Adrenal gland (tissue), 19 donors: ENCODE measurements at regions of chr1 and their contacts with region 1.

Region 1: DNA sequence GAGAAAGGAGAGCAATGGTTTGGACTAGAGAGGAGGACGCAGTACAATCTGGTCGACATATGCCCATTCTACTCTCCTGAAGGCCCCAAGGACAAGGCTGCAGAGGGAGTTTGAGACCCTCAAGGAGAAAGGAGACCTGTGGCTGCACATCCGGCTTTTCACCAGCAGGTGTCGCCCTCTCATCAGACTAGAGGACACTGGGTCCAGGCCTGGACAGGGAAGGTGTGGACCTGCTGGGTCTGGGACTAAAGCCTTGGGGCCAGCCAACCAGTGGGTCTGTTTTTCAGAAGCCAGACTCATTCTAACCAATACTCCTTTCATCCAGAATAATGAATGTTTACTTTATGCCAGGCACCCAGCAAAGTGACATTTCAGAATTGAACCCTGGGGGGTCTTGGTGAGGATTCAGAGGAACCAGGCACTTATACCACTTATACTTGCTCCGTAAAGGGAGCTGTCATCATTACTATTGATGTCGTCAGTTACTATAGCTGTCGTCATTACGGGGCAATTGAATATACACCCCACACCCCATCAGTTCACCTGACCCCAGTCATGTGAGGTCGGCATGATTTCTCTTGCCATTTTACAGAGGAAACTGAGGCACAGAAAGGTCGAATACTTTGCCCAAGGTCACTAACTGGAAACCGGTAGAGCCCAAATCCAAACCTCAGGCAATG is 5.1 kb downstream of the SRARP start:
- DNase-seq: peak; percentile 80 to 94 (median 86)
- H3K4me3 ChIP-seq: no peak overlapping the region
- H3K27ac ChIP-seq: no peak overlapping the region
- H3K4me1 ChIP-seq: peaks cover 21% of the 10 kb centered on the region in 2 donors
- H3K27me3 ChIP-seq: no peaks in the 10 kb centered on the region
- CTCF ChIP-seq: peak; percentile 97 to 98 (median 97)
- POLR2A ChIP-seq: no peak

Region 2: DNA sequence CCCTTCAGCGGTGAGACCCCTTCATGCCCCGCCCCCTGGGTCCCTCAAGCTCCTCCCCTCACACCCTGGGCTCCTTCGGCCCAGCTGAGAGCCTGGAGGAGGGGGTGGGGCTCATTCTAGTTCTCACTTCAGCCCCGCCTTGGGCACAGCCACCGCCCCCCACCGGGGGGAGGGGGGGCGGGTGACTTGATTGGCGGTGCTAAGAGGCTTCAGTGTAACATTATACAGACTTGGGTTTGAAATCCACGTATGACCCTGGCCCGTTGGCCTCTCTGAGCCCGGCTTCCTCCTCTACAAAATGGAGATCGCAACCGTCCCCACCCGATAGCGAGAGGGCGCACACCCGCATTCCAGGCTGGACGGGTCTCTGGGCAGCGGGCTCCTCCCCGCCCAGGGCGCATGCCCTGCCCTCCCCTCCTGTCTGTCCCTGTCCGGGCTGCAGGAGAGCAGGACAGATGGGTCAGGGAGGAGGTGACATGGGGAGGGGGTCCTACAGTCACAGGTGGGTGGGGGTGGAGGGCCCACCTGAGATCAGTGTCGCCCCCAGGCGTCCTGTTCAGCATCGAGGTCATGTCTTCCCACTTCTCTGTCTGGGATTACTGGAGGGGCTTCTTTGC is 39.5 kb after region 1 on chr1:
- intact Hi-C with region 1: loop called (anchors 5 to 10 kb)
- DNase-seq: peak in 2 of 7 donors; percentile 39 to 72
- H3K4me3 ChIP-seq: peak overlapping the region in 1 of 4 donors; percentile 52
- H3K27ac ChIP-seq: no peak overlapping the region
- H3K4me1 ChIP-seq: no peaks in the 10 kb centered on the region
- H3K27me3 ChIP-seq: no peaks in the 10 kb centered on the region
- CTCF ChIP-seq: no peak
- POLR2A ChIP-seq: no peak

Region 3: DNA sequence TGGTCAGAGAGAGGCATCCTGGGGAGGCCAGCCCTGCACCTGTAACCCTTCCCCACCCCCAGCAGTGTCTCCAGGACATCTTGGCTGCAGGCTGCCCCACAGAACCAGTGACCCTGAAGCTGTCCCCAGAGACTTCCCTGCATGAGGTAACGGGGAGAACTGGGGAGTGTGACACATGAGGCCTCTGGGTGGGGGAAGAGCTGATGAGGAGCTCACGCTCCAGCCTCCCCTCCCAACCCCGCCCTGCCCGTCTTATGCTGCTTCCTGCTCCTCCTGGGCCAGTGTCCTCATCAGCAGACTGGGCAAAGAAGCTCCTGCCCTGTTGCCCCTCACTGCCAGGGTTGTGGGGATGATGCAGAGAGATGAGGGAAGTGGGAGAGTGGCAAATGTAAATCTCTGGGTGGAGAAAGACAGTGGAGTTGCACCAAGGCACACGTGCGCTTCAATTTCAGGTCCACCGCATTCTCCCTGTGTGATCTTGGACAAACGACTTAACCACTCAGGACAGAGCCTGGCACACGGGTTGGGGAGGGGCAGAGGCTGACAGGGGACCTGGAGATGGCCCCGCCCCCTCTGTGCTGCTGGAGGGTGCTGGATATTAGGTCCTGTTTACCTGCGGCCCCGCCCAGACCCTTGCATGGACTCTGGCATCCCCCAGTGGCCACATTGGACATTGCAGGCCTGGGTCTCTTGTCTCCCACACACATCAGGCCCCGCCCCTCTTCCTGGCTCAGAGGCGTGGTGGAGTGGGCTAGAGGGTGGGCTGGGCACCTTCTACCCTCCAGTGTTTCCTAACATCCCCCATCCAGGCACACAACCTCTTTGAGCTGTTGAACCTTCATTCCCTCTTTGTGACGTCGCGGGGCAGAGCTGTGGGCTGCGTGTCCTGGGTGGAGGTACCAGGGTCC is 46.7 kb after region 1 on chr1:
- intact Hi-C with region 1: loop called (anchors 5 to 10 kb)
- DNase-seq: peak; percentile 78 to 95 (median 87)
- H3K4me3 ChIP-seq: no peak overlapping the region
- H3K27ac ChIP-seq: no peak overlapping the region
- H3K4me1 ChIP-seq: peaks cover 0 to 5% of the 10 kb centered on the region in 2 donors
- H3K27me3 ChIP-seq: no peaks in the 10 kb centered on the region
- CTCF ChIP-seq: peak; percentile 89 to 99 (median 94)
- POLR2A ChIP-seq: no peak

Region 4: GRCh38 chr1:16187748-16188401 is 178.7 kb after region 1 on chr1:
- intact Hi-C with region 1: loop called in 1 of 2 experiments (anchors 10 kb)
- DNase-seq: peak; percentile 62 to 88 (median 77)
- H3K4me3 ChIP-seq: no peak overlapping the region
- H3K27ac ChIP-seq: peak overlapping the region in 1 of 5 donors; percentile 46
- H3K4me1 ChIP-seq: peaks cover 4 to 8% of the 10 kb centered on the region in 2 donors
- H3K27me3 ChIP-seq: no peaks in the 10 kb centered on the region
- CTCF ChIP-seq: peak; percentile 90 to 99 (median 98)
- POLR2A ChIP-seq: no peak